ENCODE measurements at regions of chr10 and their contacts with region 1.

Region 1: DNA sequence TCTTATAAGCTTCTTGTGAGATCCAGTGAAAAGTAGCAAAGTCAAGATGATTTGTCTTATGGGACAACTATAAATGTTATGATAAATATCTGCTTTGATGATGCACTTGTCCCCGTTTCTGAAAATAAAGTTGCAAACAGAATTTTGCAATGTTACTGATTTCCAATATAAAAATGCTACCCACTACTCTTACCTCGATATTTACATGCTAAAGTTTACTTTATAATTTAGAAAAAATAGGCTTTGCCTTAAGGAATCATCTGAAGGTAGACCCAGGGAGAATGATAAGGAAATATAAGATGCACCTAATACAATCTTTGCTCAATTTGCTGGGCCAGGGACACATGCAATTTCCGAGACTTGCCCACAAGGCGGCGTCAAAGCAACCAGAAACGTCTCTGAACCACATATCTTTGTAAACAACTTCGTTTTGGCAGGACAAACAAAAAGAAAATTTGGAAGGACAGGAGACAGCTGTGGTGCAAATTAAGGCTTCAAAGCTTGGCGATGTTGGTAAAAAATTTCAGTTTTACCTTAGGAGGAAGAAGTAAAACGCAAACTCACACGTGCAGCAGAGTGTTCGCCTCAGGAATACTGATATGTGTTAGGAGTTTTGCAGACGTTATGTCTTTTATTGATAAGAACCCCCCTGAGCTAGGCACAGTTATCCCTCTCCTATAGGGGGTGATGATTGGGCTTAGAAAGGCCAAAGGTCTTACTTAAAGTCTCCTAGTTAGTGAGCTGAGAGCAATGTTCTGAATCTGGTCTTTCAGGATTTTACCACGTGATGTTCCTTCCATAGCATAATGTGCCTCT is 134.4 kb downstream of the PRKCQ start:
- DNase-seq: peak in 1 of 2 experiments; percentile 15
- H3K4me3 ChIP-seq: no peak overlapping the region
- H3K27ac ChIP-seq: no peak overlapping the region
- H3K4me1 ChIP-seq: no peaks in the 10 kb centered on the region
- H3K27me3 ChIP-seq: no peaks in the 10 kb centered on the region
- CTCF ChIP-seq: peak; percentile 67

Region 2: DNA sequence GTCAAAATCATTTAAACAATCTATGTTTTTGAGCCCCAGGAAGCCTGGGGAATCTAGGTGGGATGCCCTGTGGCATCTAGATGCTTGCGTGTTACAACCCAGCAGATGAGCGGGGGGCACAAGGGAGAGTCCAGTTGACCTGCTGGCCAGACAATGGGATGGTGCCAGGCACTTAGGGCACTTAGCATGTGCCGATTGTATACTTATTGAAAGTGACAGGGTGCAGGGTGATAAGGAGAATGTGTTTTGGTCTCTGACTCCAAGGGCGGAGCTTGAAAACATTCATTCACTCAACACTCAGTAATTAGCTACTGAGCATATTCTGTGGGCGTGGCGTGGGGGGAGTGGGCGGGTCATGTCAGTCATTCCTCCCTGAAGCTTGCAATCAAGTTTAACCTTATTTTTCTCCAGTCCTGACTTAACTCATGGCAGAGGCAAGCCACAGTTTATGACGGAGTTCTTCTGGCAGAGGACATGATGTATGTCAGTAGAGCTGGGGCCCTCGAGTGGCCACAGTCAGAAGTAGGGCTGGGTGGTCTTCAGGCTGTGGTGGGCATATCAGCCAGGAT is 19.2 kb after region 1 on chr10:
- CTCF ChIA-PET with region 1: no interaction called
- POLR2A ChIA-PET with region 1: no interaction called
- intact Hi-C with region 1: no loop called
- DNase-seq: no peak
- H3K4me3 ChIP-seq: no peak overlapping the region
- H3K27ac ChIP-seq: no peak overlapping the region
- H3K4me1 ChIP-seq: no peaks in the 10 kb centered on the region
- H3K27me3 ChIP-seq: no peaks in the 10 kb centered on the region
- CTCF ChIP-seq: no peak

Region 3: GRCh38 chr10:6580279-6581029 is 134.7 kb after region 1 on chr10:
- CTCF ChIA-PET with region 1: no interaction called
- POLR2A ChIA-PET with region 1: no interaction called
- intact Hi-C with region 1: loop called (anchors 5 kb)
- DNase-seq: peak; percentile 45 to 83
- H3K4me3 ChIP-seq: peak overlapping the region; percentile 63
- H3K27ac ChIP-seq: peak overlapping the region; percentile 50
- H3K4me1 ChIP-seq: no peaks in the 10 kb centered on the region
- H3K27me3 ChIP-seq: no peaks in the 10 kb centered on the region
- CTCF ChIP-seq: no peak; the same call in 1 of the 2 replicates

Measured in PC-9 (cell line).